ENCODE measurements at regions of chr1 and their contacts with region 1.

Region 1: GRCh38 chr1:161098210-161099068 is at the start of gene KLHDC9:
- DNase-seq: peak; percentile 78
- ATAC-seq: peak; percentile 64
- total RNA-seq, gene KLHDC9: 6.5 TPM

Region 2: GRCh38 chr1:160997323-160998038 is 101.0 kb before region 1 on chr1:
- intact Hi-C with region 1: loop called (anchors 1 kb)
- DNase-seq: no peak
- ATAC-seq: peak; percentile 84